Head of caudate nucleus (tissue), 42 donors: ENCODE measurements at regions of chr2 and their contacts with region 1.

Region 1: DNA sequence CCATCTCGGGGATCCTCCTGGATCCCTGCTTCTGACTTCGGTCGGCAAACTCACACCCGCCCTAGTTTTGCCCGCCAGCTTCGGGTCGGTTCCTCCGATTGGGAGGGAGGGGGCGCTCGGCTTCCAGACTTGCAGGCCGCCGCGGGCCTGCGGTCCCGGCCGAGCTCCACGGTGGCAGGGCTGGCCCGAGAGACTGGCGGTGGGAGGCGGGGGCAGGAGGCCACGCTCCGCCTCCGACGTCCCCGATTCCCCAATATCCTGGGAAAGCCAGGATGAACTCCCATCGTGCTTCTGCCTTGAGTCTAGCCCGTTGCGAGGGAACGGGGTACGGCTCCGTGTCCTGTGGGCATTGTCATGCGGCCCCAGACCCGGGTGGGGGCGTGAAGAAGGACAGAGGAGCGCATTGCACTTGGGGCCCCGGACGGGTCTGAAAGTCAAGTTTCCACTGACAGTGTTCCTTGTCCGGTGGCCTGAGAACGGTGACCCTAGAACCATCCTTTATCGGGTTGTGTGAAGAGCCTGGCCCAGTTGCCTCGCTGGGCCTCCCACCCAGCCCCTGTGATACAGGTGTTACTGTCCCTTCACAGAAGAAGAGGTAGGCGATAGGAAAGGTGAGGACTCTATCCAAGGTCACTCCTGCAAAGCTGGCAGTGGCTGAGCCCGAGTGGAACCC is 2.4 kb upstream of the INHBB start:
- DNase-seq: peak; percentile 51 to 92 (median 81)

Region 2: GRCh38 chr2:120037995-120038541 is 305.5 kb before region 1 on chr2:
- intact Hi-C with region 1: no loop called
- DNase-seq: no peak

Region 3: DNA sequence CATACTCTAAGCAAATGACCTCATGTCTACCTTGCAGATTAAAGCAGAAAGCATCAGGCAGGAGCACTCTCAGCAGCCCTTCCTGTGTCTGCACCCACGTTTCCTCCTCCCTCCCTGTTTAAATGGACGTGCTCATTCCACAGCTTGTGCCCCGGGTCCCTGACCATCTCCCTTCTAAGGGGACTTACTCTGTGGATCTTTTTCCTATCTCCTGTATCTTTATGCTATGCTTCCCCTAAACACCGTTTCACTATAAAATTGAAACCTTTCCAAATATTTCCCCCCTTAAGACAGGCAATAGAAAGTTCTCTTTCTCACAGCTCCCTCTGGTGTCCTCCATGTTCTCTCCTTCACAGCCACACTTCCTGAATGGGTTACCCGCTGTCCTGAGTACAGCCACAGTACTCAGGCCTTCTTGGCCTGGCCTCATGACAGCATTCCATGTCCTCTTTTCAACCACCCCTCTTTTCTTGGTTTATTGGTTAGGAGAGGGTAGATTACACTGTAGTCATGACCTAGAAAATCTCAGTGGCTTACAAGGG is 161.5 kb before region 1 on chr2:
- intact Hi-C with region 1: no loop called
- DNase-seq: no peak

Region 4: GRCh38 chr2:120294008-120294340 is 49.6 kb before region 1 on chr2:
- intact Hi-C with region 1: no loop called
- DNase-seq: no peak

Region 5: GRCh38 chr2:120384486-120385354 is 41.2 kb after region 1 on chr2:
- intact Hi-C with region 1: no loop called
- DNase-seq: no peak

Region 6: GRCh38 chr2:120511947-120512710 is 168.6 kb after region 1 on chr2:
- intact Hi-C with region 1: loop called (anchors 10 kb)
- DNase-seq: no peak

Region 7: GRCh38 chr2:120675460-120676130 is 332.0 kb after region 1 on chr2:
- intact Hi-C with region 1: loop called (anchors 2 kb)
- DNase-seq: peak in 36 of 42 donors; percentile 24 to 81 (median 58)